ENCODE measurements at regions of chr3 and their contacts with region 1.

Region 1: GRCh38 chr3:106552351-106553043 is 683.7 kb upstream of the CBLB start:
- DNase-seq: no peak
- CTCF ChIP-seq: no peak

Region 2: DNA sequence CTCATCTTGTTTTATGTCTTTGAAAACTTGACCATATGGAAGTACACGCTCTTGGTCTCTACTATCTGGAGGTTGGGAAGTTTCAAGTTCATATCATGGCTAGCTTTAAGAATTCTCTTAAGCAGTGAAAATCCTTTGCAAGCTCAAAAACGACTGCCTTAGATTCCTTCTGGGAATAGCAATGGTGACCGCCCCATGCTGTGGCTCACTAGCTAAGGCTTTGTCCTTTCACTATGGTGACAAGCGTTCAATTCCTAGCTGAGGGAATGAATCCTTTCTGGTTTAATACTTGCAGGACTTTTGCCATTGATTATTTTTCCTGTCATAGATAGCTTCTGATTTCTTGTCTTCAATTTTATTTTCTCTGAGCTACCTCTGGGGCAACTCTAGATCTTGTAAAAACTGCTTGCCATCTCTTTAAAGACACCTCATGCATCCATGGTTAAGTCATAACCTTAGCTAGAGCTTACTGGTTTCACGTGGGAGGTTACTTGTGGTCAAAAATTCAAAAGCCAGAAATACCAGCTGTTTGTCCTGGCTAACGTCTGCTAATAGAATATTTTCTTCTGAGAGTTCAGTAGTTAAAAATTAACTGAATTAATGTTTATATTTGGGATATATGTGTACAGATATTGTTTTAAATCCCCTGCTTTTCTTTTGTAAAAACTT is 10.3 kb before region 1 on chr3:
- CTCF ChIA-PET with region 1: interaction called, 11 read pairs
- POLR2A ChIA-PET with region 1: no interaction called
- DNase-seq: no peak
- CTCF ChIP-seq: no peak

Region 3: DNA sequence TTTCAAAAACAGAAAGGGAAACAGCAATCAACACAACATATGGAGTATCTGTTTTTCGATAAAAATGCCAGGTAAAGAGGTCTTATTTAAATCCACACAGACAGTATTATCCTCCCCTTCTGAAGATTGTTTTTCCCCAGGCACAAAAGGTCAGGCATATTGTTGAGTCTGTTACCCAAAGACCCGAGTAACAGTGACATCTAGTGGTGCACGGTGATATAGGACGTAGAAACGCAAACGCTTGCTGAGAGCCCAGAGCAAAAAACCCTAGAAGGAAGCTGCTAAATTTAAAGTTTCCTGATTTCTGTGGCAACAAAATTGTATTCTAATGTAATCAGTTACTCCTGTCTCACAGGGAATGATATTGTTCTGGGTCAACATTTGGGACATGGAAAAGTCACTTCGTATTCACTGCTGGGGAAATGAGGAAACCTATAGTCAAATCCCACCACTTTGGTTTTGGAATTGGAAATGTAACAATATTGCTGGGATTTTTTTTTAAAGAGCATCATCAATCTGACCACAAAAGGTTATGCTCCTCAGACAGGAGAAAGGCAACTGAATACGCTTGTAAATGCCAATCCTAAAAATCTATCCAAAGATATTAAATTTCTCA is 512.1 kb after region 1 on chr3:
- CTCF ChIA-PET with region 1: no interaction called
- POLR2A ChIA-PET with region 1: no interaction called
- DNase-seq: peak; percentile 55
- CTCF ChIP-seq: peak; percentile 85

Measured in GM10248 (cell line).